H1 (cell line): ENCODE measurements at regions of chr2 and their contacts with region 1.

Region 1: DNA sequence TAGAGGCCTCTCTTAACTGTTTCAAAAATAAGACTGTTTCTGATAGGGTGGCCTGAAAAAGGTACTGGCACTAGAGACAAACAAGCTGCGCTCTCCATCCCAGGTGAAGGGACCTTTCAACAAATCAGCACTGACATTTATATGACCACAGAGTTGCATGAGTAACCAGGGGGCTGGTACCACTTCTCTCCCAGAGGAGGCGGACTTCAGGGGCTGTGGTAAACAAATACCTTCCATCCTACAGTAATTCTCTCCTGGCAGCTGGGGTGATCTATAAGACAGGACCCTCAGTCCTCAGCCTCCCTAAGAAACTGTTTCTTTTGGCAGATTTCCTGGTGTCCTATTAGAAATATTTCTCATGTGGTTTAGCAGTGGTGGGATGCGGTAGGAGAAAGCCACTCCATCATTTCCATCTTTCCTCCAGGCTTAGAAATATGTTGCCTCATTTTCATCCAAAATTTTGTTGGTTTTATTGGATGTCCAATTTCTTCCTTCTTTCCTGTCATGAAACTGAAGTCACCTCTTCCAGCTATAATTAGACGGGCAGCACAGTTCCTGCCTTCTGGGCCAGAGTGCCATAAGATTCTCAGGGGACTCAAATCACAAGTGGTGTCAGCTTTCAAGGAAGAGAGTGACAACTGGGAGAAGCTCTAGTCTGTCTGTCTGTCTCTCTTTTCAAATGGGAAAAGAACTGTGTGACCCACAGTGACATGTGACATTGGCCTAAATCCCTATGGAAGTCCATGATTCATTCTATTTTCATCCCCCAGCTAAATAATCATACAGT is 96.4 kb downstream of the CYRIA start:
- DNase-seq: no peak
- H3K4me3 ChIP-seq: no peak overlapping the region
- H3K27ac ChIP-seq: no peak overlapping the region
- H3K4me1 ChIP-seq: no peaks in the 10 kb centered on the region
- H3K27me3 ChIP-seq: no peaks in the 10 kb centered on the region
- CTCF ChIP-seq: no peak
- EP300 ChIP-seq: no peak
- POLR2A ChIP-seq: no peak
- RAD21 ChIP-seq: no peak; a peak in 1 of 4 replicates

Region 2: GRCh38 chr2:16553226-16553625 is 16.0 kb before region 1 on chr2:
- CTCF ChIA-PET with region 1: interaction called, 15 read pairs
- POLR2A ChIA-PET with region 1: no interaction called
- DNase-seq: peak in 1 of 2 experiments; percentile 51
- H3K4me3 ChIP-seq: no peak overlapping the region
- H3K27ac ChIP-seq: no peak overlapping the region
- H3K4me1 ChIP-seq: peaks cover 0 to 3% (median 0%) of the 10 kb centered on the region in 4 experiments; a peak in 1 of 7 replicates
- H3K27me3 ChIP-seq: no peaks in the 10 kb centered on the region
- CTCF ChIP-seq: peak; percentile 33 to 73 (median 67)
- EP300 ChIP-seq: no peak
- POLR2A ChIP-seq: no peak
- RAD21 ChIP-seq: peak; percentile 61 to 77